GM12878 (cell line): ENCODE measurements at regions of chr18 and their contacts with region 1.

Region 1: GRCh38 chr18:76492669-76493212 is 2.3 kb downstream of the ZNF516 start:
- DNase-seq: peak; percentile 94
- ATAC-seq: peak; percentile 80
- H3K4me3 ChIP-seq: peak overlapping the region; percentile 79
- H3K27ac ChIP-seq: peak overlapping the region; percentile 79
- H3K4me1 ChIP-seq: peaks cover 9% of the 10 kb centered on the region; the same call in 1 of the 2 replicates
- H3K27me3 ChIP-seq: no peaks in the 10 kb centered on the region
- CTCF ChIP-seq: no peak
- EP300 ChIP-seq: no peak
- POLR2A ChIP-seq: no peak; the same call in 1 of the 2 replicates
- RAD21 ChIP-seq: no peak

Region 2: GRCh38 chr18:74597662-74598349 is 1894.9 kb before region 1 on chr18 and contains the start of gene ZNF407:
- CTCF ChIA-PET with region 1: no interaction called
- POLR2A ChIA-PET with region 1: no interaction called
- RAD21 ChIA-PET with region 1: no interaction called
- SMC1A ChIA-PET with region 1: no interaction called
- in situ Hi-C with region 1: no loop called
- intact Hi-C with region 1: loop called (anchors 5 kb)
- DNase-seq: peak; percentile 61
- ATAC-seq: peak; percentile 90
- H3K4me3 ChIP-seq: peak within 1 kb of the TSS; percentile 99
- H3K27ac ChIP-seq: peak within 1 kb of the TSS; percentile 99
- H3K4me1 ChIP-seq: peaks cover 7% of the 10 kb centered on the region
- H3K27me3 ChIP-seq: no peaks in the 10 kb centered on the region
- CTCF ChIP-seq: no peak
- EP300 ChIP-seq: no peak
- POLR2A ChIP-seq: peak; percentile 70; the same call in 1 of the 2 replicates
- RAD21 ChIP-seq: no peak
- polyA plus RNA-seq, gene ZNF407: 0.69 to 0.88 TPM

Region 3: DNA sequence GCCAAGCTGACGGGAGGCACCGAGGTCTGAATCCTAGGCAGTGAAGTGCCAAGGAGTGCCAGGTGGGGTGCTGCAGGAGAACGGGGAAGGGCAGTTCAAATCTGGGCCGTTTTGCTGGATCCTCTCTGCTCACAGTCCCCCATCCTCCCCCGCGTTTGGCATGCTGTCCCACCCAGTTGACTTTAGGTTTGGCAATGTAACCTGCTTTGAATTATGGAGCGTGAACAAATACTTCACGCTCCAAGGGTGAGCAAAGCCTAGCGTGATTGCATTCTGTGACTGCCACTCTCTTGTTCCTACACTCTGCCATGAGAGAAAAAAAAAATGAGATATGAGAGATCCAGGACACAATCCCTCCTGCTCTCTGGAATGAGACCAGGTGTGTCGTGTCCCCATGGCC is 379.6 kb before region 1 on chr18:
- CTCF ChIA-PET with region 1: no interaction called
- POLR2A ChIA-PET with region 1: no interaction called
- RAD21 ChIA-PET with region 1: no interaction called
- SMC1A ChIA-PET with region 1: no interaction called
- in situ Hi-C with region 1: no loop called
- intact Hi-C with region 1: no loop called
- DNase-seq: no peak
- ATAC-seq: no peak
- H3K4me3 ChIP-seq: no peak overlapping the region
- H3K27ac ChIP-seq: no peak overlapping the region
- H3K4me1 ChIP-seq: no peaks in the 10 kb centered on the region
- H3K27me3 ChIP-seq: no peaks in the 10 kb centered on the region; a peak in 1 of 4 replicates
- CTCF ChIP-seq: no peak
- EP300 ChIP-seq: no peak
- POLR2A ChIP-seq: no peak
- RAD21 ChIP-seq: no peak

Region 4: GRCh38 chr18:76410660-76411417 is 81.9 kb before region 1 on chr18:
- CTCF ChIA-PET with region 1: no interaction called
- POLR2A ChIA-PET with region 1: no interaction called
- RAD21 ChIA-PET with region 1: interaction called, 3 read pairs
- SMC1A ChIA-PET with region 1: interaction called, 3 read pairs
- in situ Hi-C with region 1: no loop called
- intact Hi-C with region 1: loop called (anchors 5 kb)
- DNase-seq: peak; percentile 40
- ATAC-seq: peak; percentile 96
- H3K4me3 ChIP-seq: no peak overlapping the region; the same call in 1 of the 2 replicates
- H3K27ac ChIP-seq: 0 out of 2 replicates have a peak overlapping the region, but pooled peaks have one; percentile 46
- H3K4me1 ChIP-seq: peaks cover 13% of the 10 kb centered on the region
- H3K27me3 ChIP-seq: no peaks in the 10 kb centered on the region
- CTCF ChIP-seq: no peak
- EP300 ChIP-seq: no peak
- POLR2A ChIP-seq: no peak
- RAD21 ChIP-seq: no peak

Region 5: DNA sequence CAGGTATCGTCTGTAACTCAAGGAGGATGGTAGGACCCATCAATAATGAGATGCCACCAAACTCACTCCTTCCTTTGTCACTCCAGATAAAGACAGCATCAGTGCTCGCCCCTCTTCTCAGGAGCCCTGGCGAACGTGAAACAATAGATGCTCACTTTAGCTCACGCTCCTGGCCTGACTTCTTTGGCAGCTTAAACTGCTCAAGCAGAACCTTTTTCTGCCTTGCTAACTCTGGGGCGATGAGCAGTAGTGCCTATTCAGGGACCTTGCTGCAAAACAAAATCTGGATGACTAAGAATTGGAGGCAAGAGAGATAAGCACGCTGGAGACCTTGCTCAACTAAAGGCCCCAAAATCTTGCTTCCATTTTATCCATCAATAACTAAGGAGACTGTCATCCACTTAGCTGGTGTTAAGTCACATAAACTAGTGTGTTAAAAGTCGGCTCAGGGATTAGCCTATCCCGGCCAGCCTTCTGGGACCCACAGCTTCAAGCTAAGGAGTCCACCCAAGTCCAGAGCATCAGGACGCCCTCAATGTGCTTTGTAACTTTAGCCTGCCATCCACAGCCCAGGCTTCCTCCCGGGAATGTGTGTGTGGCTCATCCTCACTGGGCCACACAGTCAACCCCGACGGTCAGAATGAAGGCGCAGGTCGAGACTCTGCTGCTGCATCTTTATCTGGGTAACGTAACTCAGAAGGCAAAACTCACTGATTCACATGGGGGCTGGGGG is 36.6 kb before region 1 on chr18:
- CTCF ChIA-PET with region 1: interaction called, 3 read pairs
- POLR2A ChIA-PET with region 1: interaction called, 3 read pairs
- RAD21 ChIA-PET with region 1: interaction called, 4 read pairs
- SMC1A ChIA-PET with region 1: interaction called, 9 read pairs
- in situ Hi-C with region 1: no loop called
- intact Hi-C with region 1: loop called (anchors 2 kb)
- DNase-seq: no peak
- ATAC-seq: peak; percentile 49
- H3K4me3 ChIP-seq: no peak overlapping the region; the same call in 1 of the 2 replicates
- H3K27ac ChIP-seq: peak overlapping the region; percentile 48
- H3K4me1 ChIP-seq: peaks cover 17% of the 10 kb centered on the region
- H3K27me3 ChIP-seq: no peaks in the 10 kb centered on the region
- CTCF ChIP-seq: no peak
- EP300 ChIP-seq: no peak
- POLR2A ChIP-seq: no peak
- RAD21 ChIP-seq: no peak

Region 6: GRCh38 chr18:76528477-76529432 is 36.0 kb after region 1 on chr18:
- CTCF ChIA-PET with region 1: no interaction called
- POLR2A ChIA-PET with region 1: no interaction called
- RAD21 ChIA-PET with region 1: no interaction called
- SMC1A ChIA-PET with region 1: no interaction called
- in situ Hi-C with region 1: no loop called
- intact Hi-C with region 1: no loop called
- DNase-seq: peak; percentile 13
- ATAC-seq: peak; percentile 20; the same call in 1 of the 3 replicates
- H3K4me3 ChIP-seq: peak overlapping the region; percentile 57
- H3K27ac ChIP-seq: peak overlapping the region; percentile 48; the same call in 1 of the 2 replicates
- H3K4me1 ChIP-seq: peaks cover 6% of the 10 kb centered on the region; the same call in 1 of the 2 replicates
- H3K27me3 ChIP-seq: no peaks in the 10 kb centered on the region
- CTCF ChIP-seq: 0 out of 6 replicates have a peak, but pooled peaks of 2 of the 3 experiments have one; percentile 0 to 17
- EP300 ChIP-seq: no peak
- POLR2A ChIP-seq: no peak
- RAD21 ChIP-seq: no peak

Region 7: GRCh38 chr18:76573325-76574025 is 80.7 kb after region 1 on chr18:
- CTCF ChIA-PET with region 1: no interaction called
- POLR2A ChIA-PET with region 1: no interaction called
- RAD21 ChIA-PET with region 1: no interaction called
- SMC1A ChIA-PET with region 1: no interaction called
- in situ Hi-C with region 1: no loop called
- intact Hi-C with region 1: no loop called
- DNase-seq: no peak
- ATAC-seq: no peak
- H3K4me3 ChIP-seq: no peak overlapping the region
- H3K27ac ChIP-seq: no peak overlapping the region
- H3K4me1 ChIP-seq: no peaks in the 10 kb centered on the region
- H3K27me3 ChIP-seq: peaks cover 0 to 2% of the 10 kb centered on the region in 2 experiments; a peak in 1 of 4 replicates
- CTCF ChIP-seq: no peak
- EP300 ChIP-seq: no peak
- POLR2A ChIP-seq: no peak
- RAD21 ChIP-seq: no peak

Region 8: GRCh38 chr18:76822510-76823160 is 329.9 kb after region 1 on chr18 and contains the start of gene ZNF236:
- CTCF ChIA-PET with region 1: no interaction called
- POLR2A ChIA-PET with region 1: interaction called, 3 read pairs
- RAD21 ChIA-PET with region 1: no interaction called
- SMC1A ChIA-PET with region 1: no interaction called
- in situ Hi-C with region 1: no loop called
- intact Hi-C with region 1: loop called (anchors 10 kb)
- DNase-seq: no peak
- ATAC-seq: peak; percentile 47
- H3K4me3 ChIP-seq: peak within 1 kb of the TSS; percentile 100
- H3K27ac ChIP-seq: peak within 1 kb of the TSS; percentile 95
- H3K4me1 ChIP-seq: peaks cover 16% of the 10 kb centered on the region
- H3K27me3 ChIP-seq: no peaks in the 10 kb centered on the region
- CTCF ChIP-seq: no peak
- EP300 ChIP-seq: no peak
- POLR2A ChIP-seq: peak; percentile 76
- RAD21 ChIP-seq: no peak
- polyA plus RNA-seq, gene ZNF236: 1.0 to 1.3 TPM